ENCODE measurements at regions of chr16 and their contacts with region 1.

Region 1: GRCh38 chr16:86519649-86520316 is 9.5 kb downstream of the FOXF1 start:
- DNase-seq: no peak
- ATAC-seq: peak in 1 of 2 donors; percentile 54
- H3K4me3 ChIP-seq: no peak overlapping the region
- H3K27ac ChIP-seq: no peak overlapping the region
- H3K4me1 ChIP-seq: peaks cover 0 to 9% of the 10 kb centered on the region in 2 donors
- H3K27me3 ChIP-seq: peaks cover 80 to 89% (median 89%) of the 10 kb centered on the region in 3 donors
- CTCF ChIP-seq: peak; percentile 69 to 89 (median 74)
- POLR2A ChIP-seq: no peak

Region 2: GRCh38 chr16:85799497-85800337 is 720.1 kb before region 1 on chr16 and contains the starts of genes COX4I1 and EMC8:
- in situ Hi-C with region 1: loop called in 1 of 4 experiments (anchors 25 kb)
- intact Hi-C with region 1: no loop called
- DNase-seq: peak; percentile 94
- ATAC-seq: peak; percentile 95
- H3K4me3 ChIP-seq: peak within 1 kb of the TSS; percentile 67 to 97 (median 91)
- H3K27ac ChIP-seq: peak within 1 kb of the TSS; percentile 90 to 98 (median 94)
- H3K4me1 ChIP-seq: peaks cover 17 to 26% of the 10 kb centered on the region in 2 donors
- H3K27me3 ChIP-seq: no peaks in the 10 kb centered on the region
- CTCF ChIP-seq: peak in 1 of 5 experiments; percentile 5
- POLR2A ChIP-seq: peak; percentile 98 to 99
- total RNA-seq, gene COX4I1: 666 to 782 (median 689) TPM
- total RNA-seq, gene EMC8: 29.6 to 39.8 (median 36.4) TPM

Region 3: GRCh38 chr16:85821441-85822135 is 698.2 kb before region 1 on chr16:
- in situ Hi-C with region 1: loop called in 2 of 4 experiments (anchors 25 kb)
- intact Hi-C with region 1: loop called (anchors 2 kb)
- DNase-seq: peak; percentile 26 to 39
- ATAC-seq: peak; percentile 52 to 56
- H3K4me3 ChIP-seq: no peak overlapping the region
- H3K27ac ChIP-seq: no peak overlapping the region
- H3K4me1 ChIP-seq: no peaks in the 10 kb centered on the region
- H3K27me3 ChIP-seq: peaks cover 0 to 18% (median 6%) of the 10 kb centered on the region in 3 donors
- CTCF ChIP-seq: peak; percentile 77 to 96 (median 89)
- POLR2A ChIP-seq: no peak

Region 4: GRCh38 chr16:85829751-85830445 is 689.9 kb before region 1 on chr16:
- in situ Hi-C with region 1: loop called in 1 of 4 experiments (anchors 25 kb)
- intact Hi-C with region 1: no loop called
- DNase-seq: peak; percentile 21 to 40
- ATAC-seq: no peak
- H3K4me3 ChIP-seq: no peak overlapping the region
- H3K27ac ChIP-seq: no peak overlapping the region
- H3K4me1 ChIP-seq: no peaks in the 10 kb centered on the region
- H3K27me3 ChIP-seq: peaks cover 16 to 22% (median 22%) of the 10 kb centered on the region in 3 donors
- CTCF ChIP-seq: no peak
- POLR2A ChIP-seq: no peak

Region 5: DNA sequence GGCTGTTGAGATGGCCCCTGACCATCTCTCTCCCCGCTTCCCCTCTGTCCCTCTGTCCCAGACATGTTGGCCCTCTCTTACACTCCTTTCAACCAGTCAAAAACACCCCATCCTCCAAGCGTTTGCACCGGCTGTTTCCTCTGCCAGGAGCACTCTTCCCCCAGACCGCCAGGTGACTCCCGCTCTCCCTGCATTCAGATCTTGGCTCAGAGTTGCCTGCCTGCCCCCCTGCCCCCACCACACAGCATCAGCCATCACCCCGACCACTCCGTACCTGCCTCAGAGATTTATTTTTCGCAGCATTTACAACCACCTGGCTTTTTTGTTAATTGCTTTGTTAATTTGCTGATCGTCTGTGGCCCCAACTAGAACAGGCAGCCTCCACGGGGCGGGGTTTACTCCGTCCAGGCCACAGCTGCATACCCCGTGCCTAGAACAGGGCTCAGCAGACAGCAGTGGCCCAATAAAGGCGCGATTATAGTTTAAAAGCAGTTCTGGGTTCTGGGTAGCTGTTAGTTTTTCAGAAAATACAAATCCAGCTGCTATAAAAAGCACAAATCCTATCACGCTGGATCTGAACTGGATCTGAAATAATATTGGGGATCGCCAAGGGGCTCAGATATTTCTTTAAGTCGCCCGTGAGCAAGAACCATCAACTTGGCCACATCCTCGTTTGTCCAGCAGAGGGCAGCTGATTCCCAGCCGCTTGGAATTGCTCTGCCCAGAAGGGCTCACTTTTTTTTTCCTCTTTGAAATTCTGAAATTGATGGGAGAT is 447.3 kb before region 1 on chr16:
- in situ Hi-C with region 1: loop called in 3 of 4 experiments (anchors 5 to 10 kb)
- intact Hi-C with region 1: loop called (anchors 5 kb)
- DNase-seq: no peak
- ATAC-seq: peak in 1 of 2 donors; percentile 36
- H3K4me3 ChIP-seq: no peak overlapping the region
- H3K27ac ChIP-seq: no peak overlapping the region
- H3K4me1 ChIP-seq: no peaks in the 10 kb centered on the region
- H3K27me3 ChIP-seq: peaks cover 0 to 35% (median 11%) of the 10 kb centered on the region in 3 donors
- CTCF ChIP-seq: peak in 3 of 5 experiments; percentile 24 to 67 (median 64)
- POLR2A ChIP-seq: no peak

Region 6: GRCh38 chr16:86343027-86343787 is 176.6 kb before region 1 on chr16:
- in situ Hi-C with region 1: loop called (anchors 5 to 25 kb)
- intact Hi-C with region 1: loop called (anchors 5 kb)
- DNase-seq: no peak
- ATAC-seq: no peak
- H3K4me3 ChIP-seq: no peak overlapping the region
- H3K27ac ChIP-seq: peak overlapping the region in 1 of 4 donors; percentile 48
- H3K4me1 ChIP-seq: no peaks in the 10 kb centered on the region
- H3K27me3 ChIP-seq: peaks cover 18 to 20% (median 18%) of the 10 kb centered on the region in 3 donors
- CTCF ChIP-seq: no peak
- POLR2A ChIP-seq: no peak

Region 7: GRCh38 chr16:86618811-86619794 is 99.3 kb after region 1 on chr16:
- in situ Hi-C with region 1: no loop called
- intact Hi-C with region 1: no loop called
- DNase-seq: no peak
- ATAC-seq: peak in 1 of 2 donors; percentile 9
- H3K4me3 ChIP-seq: peak overlapping the region in 3 of 4 donors; percentile 14 to 22 (median 20)
- H3K27ac ChIP-seq: no peak overlapping the region
- H3K4me1 ChIP-seq: peaks cover 11 to 15% of the 10 kb centered on the region in 2 donors
- H3K27me3 ChIP-seq: no peaks in the 10 kb centered on the region
- CTCF ChIP-seq: no peak
- POLR2A ChIP-seq: no peak

Measured in gastrocnemius medialis (tissue), 4 donors.